AG04450 (cell line): ENCODE measurements at regions of chr2 and their contacts with region 1.

Region 1: DNA sequence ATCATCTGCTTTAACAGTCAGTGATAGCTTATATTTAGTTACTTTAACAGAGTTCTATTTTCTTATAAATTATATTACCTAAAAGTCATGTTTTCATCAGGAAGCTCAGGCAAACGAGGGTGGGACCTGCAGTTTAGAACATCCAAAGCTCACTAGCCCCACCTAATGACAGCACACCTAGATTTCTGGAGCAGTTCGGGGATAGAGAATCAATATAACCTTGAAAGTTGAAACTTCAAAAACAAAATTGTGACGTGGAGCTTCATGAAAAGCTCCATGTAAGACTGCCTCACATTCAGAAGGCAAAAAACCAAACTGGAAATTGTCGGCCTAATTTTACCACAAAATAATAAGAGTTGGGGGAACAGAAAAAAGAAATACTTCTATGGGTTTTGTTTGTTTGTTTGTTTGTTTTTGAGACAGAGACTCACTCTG is 185.9 kb upstream of the CCDC150 start:
- DNase-seq: peak; percentile 34
- H3K4me3 ChIP-seq: no peak overlapping the region
- H3K27ac ChIP-seq: no peak overlapping the region
- H3K27me3 ChIP-seq: no peaks in the 10 kb centered on the region
- CTCF ChIP-seq: peak; percentile 74

Region 2: DNA sequence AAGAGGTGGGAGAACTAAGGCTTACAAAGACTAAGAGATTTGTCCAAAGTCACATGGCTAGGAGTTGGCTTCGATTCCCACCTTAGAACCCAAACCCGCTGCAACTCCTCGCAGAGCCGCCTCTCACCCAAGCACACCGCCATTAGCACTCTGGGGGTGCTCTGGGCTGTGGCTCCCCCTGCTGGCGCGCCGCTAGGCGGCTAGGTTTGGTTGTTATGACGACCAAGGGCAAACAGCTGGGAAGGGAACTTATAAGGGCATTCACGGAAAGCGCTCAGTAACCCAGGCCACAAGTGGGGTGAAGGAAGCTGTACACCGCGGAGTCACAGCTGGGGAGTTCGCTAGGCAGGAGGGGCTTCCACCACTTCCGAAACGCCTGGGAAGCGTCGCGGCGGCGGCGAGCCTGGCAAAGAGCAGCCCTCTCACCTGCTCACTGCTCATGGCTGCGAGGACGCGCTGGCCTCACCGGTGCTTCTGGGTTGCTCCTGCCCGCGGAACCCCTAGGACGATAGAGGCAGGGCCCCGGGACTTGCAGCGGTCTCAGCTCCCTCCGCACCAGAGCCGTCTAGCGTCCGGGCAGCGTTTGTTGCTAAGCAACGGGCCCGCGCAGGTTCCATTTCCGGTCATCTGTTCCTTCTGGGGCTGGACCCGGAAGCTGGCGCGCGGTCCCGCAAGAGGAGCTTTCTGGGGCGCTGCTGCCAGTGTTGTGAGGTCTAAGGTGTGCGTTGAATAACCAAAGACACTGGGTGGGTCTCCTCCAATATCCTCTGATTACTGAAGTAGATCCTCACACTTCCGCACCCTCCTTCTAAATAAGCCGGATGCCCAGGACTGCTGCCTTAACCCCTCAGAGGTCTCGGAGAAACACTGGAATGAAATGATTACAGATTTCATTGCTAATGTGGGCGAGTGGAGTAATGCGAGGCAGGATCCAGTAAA is 385.1 kb before region 1 on chr2 and contains the start of gene DNAH7:
- CTCF ChIA-PET with region 1: interaction called, 27 read pairs
- POLR2A ChIA-PET with region 1: no interaction called
- DNase-seq: peak; percentile 58
- H3K4me3 ChIP-seq: peak within 1 kb of the TSS; percentile 96
- H3K27ac ChIP-seq: peak within 1 kb of the TSS; percentile 60
- H3K27me3 ChIP-seq: no peaks in the 10 kb centered on the region
- CTCF ChIP-seq: peak; percentile 99
- polyA plus RNA-seq, gene DNAH7: 0.74 and 1.2 TPM in 2 replicates

Region 3: DNA sequence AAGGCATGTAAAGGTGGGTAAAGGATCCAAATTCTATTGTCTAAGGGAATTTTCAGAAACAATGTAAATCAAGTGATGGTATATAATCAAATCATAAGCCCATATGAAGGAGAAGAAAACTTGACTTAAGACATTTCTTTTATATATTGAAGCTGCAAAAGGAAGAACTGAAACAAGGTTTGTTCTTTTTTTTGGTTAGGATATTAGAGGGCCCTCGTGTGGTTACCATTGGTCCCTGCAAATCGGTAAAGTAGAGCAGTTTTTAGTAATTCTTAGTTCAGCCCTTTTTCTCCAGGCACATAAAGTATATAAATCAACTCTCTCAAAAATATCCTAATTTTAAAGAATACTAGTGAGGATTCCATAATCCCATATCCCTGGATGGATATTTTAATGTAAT is 176.6 kb before region 1 on chr2:
- CTCF ChIA-PET with region 1: interaction called, 14 read pairs
- POLR2A ChIA-PET with region 1: no interaction called
- DNase-seq: no peak
- H3K4me3 ChIP-seq: no peak overlapping the region
- H3K27ac ChIP-seq: no peak overlapping the region
- H3K27me3 ChIP-seq: no peaks in the 10 kb centered on the region
- CTCF ChIP-seq: peak; percentile 67

Region 4: GRCh38 chr2:196291873-196292800 is 161.5 kb before region 1 on chr2:
- CTCF ChIA-PET with region 1: interaction called, 15 read pairs
- POLR2A ChIA-PET with region 1: no interaction called
- DNase-seq: no peak
- H3K4me3 ChIP-seq: no peak overlapping the region
- H3K27ac ChIP-seq: no peak overlapping the region
- H3K27me3 ChIP-seq: no peaks in the 10 kb centered on the region
- CTCF ChIP-seq: no peak

Region 5: DNA sequence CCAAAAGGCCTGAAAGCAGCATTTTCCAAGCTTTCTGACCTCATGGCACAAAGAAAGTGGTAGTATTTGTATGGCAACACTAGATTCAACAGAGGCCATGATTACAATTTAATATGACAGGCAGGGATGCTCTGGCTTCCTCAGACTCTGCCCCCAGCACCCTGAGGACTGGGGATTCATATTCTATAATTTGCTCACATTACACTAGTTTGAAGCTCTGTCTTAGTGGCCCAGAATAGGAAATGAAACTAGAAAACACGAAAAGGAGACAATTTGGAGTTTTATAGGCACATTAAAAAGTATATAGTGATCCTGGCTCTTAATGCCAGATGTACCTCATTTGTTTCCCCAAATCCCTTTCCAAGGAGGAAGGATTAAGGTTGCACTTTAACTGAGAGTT is 109.2 kb before region 1 on chr2:
- CTCF ChIA-PET with region 1: interaction called, 23 read pairs
- POLR2A ChIA-PET with region 1: no interaction called
- DNase-seq: no peak
- H3K4me3 ChIP-seq: no peak overlapping the region
- H3K27ac ChIP-seq: no peak overlapping the region
- H3K27me3 ChIP-seq: no peaks in the 10 kb centered on the region
- CTCF ChIP-seq: no peak

Region 6: GRCh38 chr2:196421880-196422279 is 31.8 kb before region 1 on chr2:
- CTCF ChIA-PET with region 1: interaction called, 12 read pairs
- POLR2A ChIA-PET with region 1: no interaction called
- DNase-seq: no peak
- H3K4me3 ChIP-seq: no peak overlapping the region
- H3K27ac ChIP-seq: no peak overlapping the region
- H3K27me3 ChIP-seq: no peaks in the 10 kb centered on the region
- CTCF ChIP-seq: no peak

Region 7: DNA sequence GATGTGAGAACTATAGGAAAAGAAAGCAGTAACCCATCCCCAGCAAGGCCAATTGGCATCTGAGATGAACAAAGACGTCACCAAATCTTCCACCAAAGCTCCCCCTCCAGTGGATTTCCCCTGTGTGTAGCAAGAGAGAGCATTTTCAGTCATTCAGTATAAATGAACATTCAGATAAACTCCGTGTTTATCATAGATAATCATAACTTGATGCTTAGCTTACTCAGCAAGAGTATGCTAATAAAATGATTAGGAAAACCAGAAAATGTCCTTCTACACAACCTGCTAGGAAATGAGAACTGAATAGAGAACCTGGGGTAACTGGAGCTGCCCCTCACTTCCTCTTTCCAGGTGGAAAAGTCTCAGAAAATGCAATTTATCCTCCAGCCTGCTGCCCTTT is 12.1 kb before region 1 on chr2:
- CTCF ChIA-PET with region 1: interaction called, 24 read pairs
- POLR2A ChIA-PET with region 1: no interaction called
- DNase-seq: no peak
- H3K4me3 ChIP-seq: no peak overlapping the region
- H3K27ac ChIP-seq: no peak overlapping the region
- H3K27me3 ChIP-seq: no peaks in the 10 kb centered on the region
- CTCF ChIP-seq: no peak

Region 8: DNA sequence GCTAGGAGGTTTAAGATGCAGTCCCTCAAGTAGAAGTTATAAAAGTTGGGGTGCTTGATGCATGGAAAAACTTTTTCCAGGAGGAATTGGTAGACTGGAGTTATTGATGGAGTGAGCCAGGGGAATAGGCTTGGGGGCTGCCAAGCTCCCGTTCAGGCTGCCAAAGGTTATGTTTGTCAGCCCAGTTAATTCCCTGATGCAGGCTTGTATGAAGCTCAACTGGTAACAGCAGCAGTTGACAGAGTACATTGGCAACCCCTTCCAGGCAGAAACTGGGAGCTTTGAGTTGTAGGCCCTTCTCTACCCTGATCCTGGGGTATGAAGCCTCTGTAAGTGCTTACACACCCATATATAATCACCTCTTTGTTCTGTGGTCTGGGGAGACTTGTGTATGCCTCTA is 202.1 kb after region 1 on chr2:
- CTCF ChIA-PET with region 1: no interaction called
- POLR2A ChIA-PET with region 1: no interaction called
- DNase-seq: no peak
- H3K4me3 ChIP-seq: no peak overlapping the region
- H3K27ac ChIP-seq: no peak overlapping the region
- H3K27me3 ChIP-seq: no peaks in the 10 kb centered on the region
- CTCF ChIP-seq: no peak